CD8-positive, alpha-beta memory T cell (primary cell): ENCODE measurements at regions of chr15 and their contacts with region 1.

Region 1: DNA sequence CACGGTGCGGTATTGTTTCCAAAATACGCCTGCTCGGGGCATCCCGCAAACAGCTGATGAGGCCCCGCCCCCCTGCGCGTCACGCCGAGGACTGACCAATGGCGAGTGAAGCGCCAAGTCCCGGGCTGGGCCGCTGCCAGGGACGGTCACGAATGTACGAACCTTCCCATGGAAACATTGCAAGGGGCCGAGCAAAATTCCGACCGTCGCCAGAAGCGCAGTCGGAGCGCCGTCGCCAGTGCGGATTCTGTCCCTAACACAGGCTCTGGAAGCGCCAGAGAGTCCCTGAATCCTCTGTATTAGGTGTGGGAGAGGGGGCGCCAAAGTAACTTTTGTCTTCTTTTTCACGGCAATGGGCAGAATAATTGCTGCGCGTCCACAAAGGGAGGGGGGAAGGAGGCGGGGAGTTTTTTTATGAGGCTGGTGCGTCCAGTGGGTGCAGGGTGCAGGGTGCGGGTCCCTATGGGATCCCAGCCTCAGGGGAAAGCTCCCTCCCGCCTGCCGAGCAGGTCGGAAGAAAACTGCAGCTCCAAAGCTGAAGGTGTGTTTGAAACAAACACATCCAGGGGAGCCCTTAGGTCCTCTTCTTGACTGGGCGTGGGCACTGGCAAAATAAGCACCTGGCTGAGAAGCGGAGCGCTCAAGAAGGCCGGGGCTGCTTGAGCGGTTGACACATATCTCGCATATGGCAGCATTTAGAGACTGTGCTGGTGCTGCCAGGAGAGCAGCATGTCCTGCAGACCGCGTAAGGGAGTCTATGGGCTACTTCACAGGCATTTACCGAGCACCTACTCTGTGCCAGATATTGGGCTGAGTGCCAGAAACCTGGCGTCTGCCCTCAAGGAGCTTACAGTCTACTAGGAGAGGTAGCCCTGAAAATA is at the start of gene BMF:
- DNase-seq: peak; percentile 87 to 98 (median 95)
- H3K4me3 ChIP-seq: peak within 1 kb of the TSS; percentile 86
- H3K4me3 Mint-ChIP-seq: peak within 1 kb of the TSS; percentile 91 to 99 (median 97)
- H3K27ac ChIP-seq: peak within 1 kb of the TSS; percentile 19
- H3K27ac Mint-ChIP-seq: peak within 1 kb of the TSS; percentile 75 to 99 (median 92)
- H3K4me1 ChIP-seq: peaks cover 38% of the 10 kb centered on the region
- H3K4me1 Mint-ChIP-seq: peaks cover 42 to 51% (median 49%) of the 10 kb centered on the region in 3 donors
- H3K27me3 ChIP-seq: no peaks in the 10 kb centered on the region
- H3K27me3 Mint-ChIP-seq: peaks cover 5 to 14% of the 10 kb centered on the region in 2 donors
- total RNA-seq, gene BMF: 15.3 to 16.8 TPM

Region 2: GRCh38 chr15:40038638-40039543 is 70.2 kb before region 1 on chr15 and contains the start of gene SRP14:
- CTCF ChIA-PET with region 1: interaction called, 140 read pairs
- POLR2A ChIA-PET with region 1: interaction called, 3 read pairs
- DNase-seq: peak; percentile 89 to 95 (median 90)
- H3K4me3 ChIP-seq: peak within 1 kb of the TSS; percentile 82
- H3K4me3 Mint-ChIP-seq: peak within 1 kb of the TSS; percentile 98 to 100 (median 99)
- H3K27ac ChIP-seq: peak within 1 kb of the TSS; percentile 81
- H3K27ac Mint-ChIP-seq: peak within 1 kb of the TSS; percentile 92 to 100 (median 98)
- H3K4me1 ChIP-seq: peaks cover 20% of the 10 kb centered on the region
- H3K4me1 Mint-ChIP-seq: peaks cover 41 to 62% (median 60%) of the 10 kb centered on the region in 3 donors
- H3K27me3 ChIP-seq: no peaks in the 10 kb centered on the region
- H3K27me3 Mint-ChIP-seq: peaks cover 0 to 2% of the 10 kb centered on the region in 2 donors
- total RNA-seq, gene SRP14: 202 to 203 TPM

Region 3: GRCh38 chr15:40063563-40064011 is 45.5 kb before region 1 on chr15:
- CTCF ChIA-PET with region 1: interaction called, 30 read pairs
- POLR2A ChIA-PET with region 1: no interaction called
- DNase-seq: no peak
- H3K4me3 ChIP-seq: no peak overlapping the region
- H3K4me3 Mint-ChIP-seq: no peak overlapping the region
- H3K27ac ChIP-seq: no peak overlapping the region
- H3K27ac Mint-ChIP-seq: no peak overlapping the region
- H3K4me1 ChIP-seq: peaks cover 6% of the 10 kb centered on the region
- H3K4me1 Mint-ChIP-seq: peaks cover 6 to 12% (median 9%) of the 10 kb centered on the region in 3 donors
- H3K27me3 ChIP-seq: no peaks in the 10 kb centered on the region
- H3K27me3 Mint-ChIP-seq: no peaks in the 10 kb centered on the region

Region 4: GRCh38 chr15:40098489-40099261 is 10.4 kb before region 1 on chr15:
- CTCF ChIA-PET with region 1: interaction called, 186 read pairs
- POLR2A ChIA-PET with region 1: interaction called, 23 read pairs
- DNase-seq: peak; percentile 13 to 87 (median 38)
- H3K4me3 ChIP-seq: peak overlapping the region; percentile 42
- H3K4me3 Mint-ChIP-seq: peak overlapping the region in 6 of 7 donors; percentile 51 to 82 (median 69)
- H3K27ac ChIP-seq: peak overlapping the region; percentile 43
- H3K27ac Mint-ChIP-seq: peak overlapping the region; percentile 56 to 94 (median 86)
- H3K4me1 ChIP-seq: peaks cover 45% of the 10 kb centered on the region
- H3K4me1 Mint-ChIP-seq: peaks cover 36 to 84% (median 41%) of the 10 kb centered on the region in 3 donors
- H3K27me3 ChIP-seq: no peaks in the 10 kb centered on the region
- H3K27me3 Mint-ChIP-seq: no peaks in the 10 kb centered on the region

Region 5: GRCh38 chr15:40160689-40161688 is 51.9 kb after region 1 on chr15 and contains the start of gene BUB1B:
- CTCF ChIA-PET with region 1: interaction called, 17 read pairs
- POLR2A ChIA-PET with region 1: no interaction called
- DNase-seq: peak; percentile 87 to 94 (median 90)
- H3K4me3 ChIP-seq: peak within 1 kb of the TSS; percentile 65
- H3K4me3 Mint-ChIP-seq: no peak within 1 kb of the TSS
- H3K27ac ChIP-seq: peak within 1 kb of the TSS; percentile 68
- H3K27ac Mint-ChIP-seq: peak within 1 kb of the TSS in 1 of 8 donors; percentile 85
- H3K4me1 ChIP-seq: peaks cover 13% of the 10 kb centered on the region
- H3K4me1 Mint-ChIP-seq: peaks cover 0 to 5% (median 3%) of the 10 kb centered on the region in 3 donors
- H3K27me3 ChIP-seq: no peaks in the 10 kb centered on the region
- H3K27me3 Mint-ChIP-seq: no peaks in the 10 kb centered on the region
- total RNA-seq, gene BUB1B: 44.4 to 50.3 TPM